Mammary epithelial cell (primary cell): ENCODE measurements at regions of chr11 and their contacts with region 1.

Region 1: DNA sequence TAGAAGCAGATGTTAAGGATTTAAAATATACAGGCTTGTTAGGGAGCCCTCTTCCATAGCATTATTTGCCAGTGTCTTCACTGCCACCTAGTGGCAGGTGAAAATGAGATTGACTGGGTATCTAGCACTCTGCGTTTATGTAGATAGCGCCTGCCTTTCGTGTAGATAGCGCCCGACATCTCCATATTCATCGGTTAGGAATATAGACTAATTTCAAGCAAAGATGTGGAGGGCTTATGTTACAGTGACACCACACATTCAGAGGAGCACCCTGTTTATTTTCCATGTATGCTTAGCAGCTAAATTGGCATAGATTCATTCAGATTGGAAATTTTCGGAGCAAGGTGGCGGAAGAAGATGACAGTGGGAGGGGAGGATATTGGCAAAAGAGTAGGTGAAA is 72.0 kb downstream of the SLC5A12 start:
- DNase-seq: peak; percentile 58
- H3K4me3 ChIP-seq: no peak overlapping the region
- H3K27ac ChIP-seq: no peak overlapping the region
- H3K4me1 ChIP-seq: no peaks in the 10 kb centered on the region
- H3K27me3 ChIP-seq: peaks cover 5% of the 10 kb centered on the region
- CTCF ChIP-seq: peak; percentile 72 to 77

Region 2: GRCh38 chr11:26286472-26287066 is 363.3 kb before region 1 on chr11:
- CTCF ChIA-PET with region 1: no interaction called
- dilution Hi-C with region 1: no loop called
- in situ Hi-C with region 1: loop called in 1 of 2 experiments (anchors 10 kb)
- intact Hi-C with region 1: no loop called
- DNase-seq: peak; percentile 1
- H3K4me3 ChIP-seq: no peak overlapping the region
- H3K27ac ChIP-seq: no peak overlapping the region
- H3K4me1 ChIP-seq: no peaks in the 10 kb centered on the region
- H3K27me3 ChIP-seq: no peaks in the 10 kb centered on the region
- CTCF ChIP-seq: peak; percentile 23 to 40

Region 3: GRCh38 chr11:26319906-26320305 is 330.0 kb before region 1 on chr11:
- CTCF ChIA-PET with region 1: no interaction called
- dilution Hi-C with region 1: no loop called
- in situ Hi-C with region 1: loop called in 1 of 2 experiments (anchors 25 kb)
- intact Hi-C with region 1: no loop called
- DNase-seq: peak; percentile 9
- H3K4me3 ChIP-seq: no peak overlapping the region
- H3K27ac ChIP-seq: no peak overlapping the region
- H3K4me1 ChIP-seq: no peaks in the 10 kb centered on the region
- H3K27me3 ChIP-seq: peaks cover 2% of the 10 kb centered on the region
- CTCF ChIP-seq: no peak

Region 4: GRCh38 chr11:26522912-26523610 is 126.8 kb before region 1 on chr11:
- CTCF ChIA-PET with region 1: no interaction called
- dilution Hi-C with region 1: no loop called
- in situ Hi-C with region 1: loop called (anchors 5 to 10 kb)
- intact Hi-C with region 1: loop called (anchors 1 kb)
- DNase-seq: peak; percentile 25
- H3K4me3 ChIP-seq: no peak overlapping the region
- H3K27ac ChIP-seq: no peak overlapping the region
- H3K4me1 ChIP-seq: no peaks in the 10 kb centered on the region
- H3K27me3 ChIP-seq: no peaks in the 10 kb centered on the region
- CTCF ChIP-seq: peak; percentile 37 to 65

Region 5: GRCh38 chr11:26551186-26551801 is 98.6 kb before region 1 on chr11:
- CTCF ChIA-PET with region 1: no interaction called
- dilution Hi-C with region 1: no loop called
- in situ Hi-C with region 1: no loop called
- intact Hi-C with region 1: no loop called
- DNase-seq: peak; percentile 6
- H3K4me3 ChIP-seq: no peak overlapping the region
- H3K27ac ChIP-seq: no peak overlapping the region
- H3K4me1 ChIP-seq: no peaks in the 10 kb centered on the region
- H3K27me3 ChIP-seq: no peaks in the 10 kb centered on the region
- CTCF ChIP-seq: peak; percentile 33 to 55

Region 6: GRCh38 chr11:26704249-26704648 is 54.4 kb after region 1 on chr11:
- CTCF ChIA-PET with region 1: no interaction called
- dilution Hi-C with region 1: no loop called
- in situ Hi-C with region 1: no loop called
- intact Hi-C with region 1: no loop called
- DNase-seq: peak; percentile 39
- H3K4me3 ChIP-seq: no peak overlapping the region
- H3K27ac ChIP-seq: no peak overlapping the region
- H3K4me1 ChIP-seq: no peaks in the 10 kb centered on the region
- H3K27me3 ChIP-seq: peaks cover 2% of the 10 kb centered on the region
- CTCF ChIP-seq: no peak